Endothelial cell of umbilical vein (primary cell): ENCODE measurements at regions of chr14 and their contacts with region 1.

Region 1: DNA sequence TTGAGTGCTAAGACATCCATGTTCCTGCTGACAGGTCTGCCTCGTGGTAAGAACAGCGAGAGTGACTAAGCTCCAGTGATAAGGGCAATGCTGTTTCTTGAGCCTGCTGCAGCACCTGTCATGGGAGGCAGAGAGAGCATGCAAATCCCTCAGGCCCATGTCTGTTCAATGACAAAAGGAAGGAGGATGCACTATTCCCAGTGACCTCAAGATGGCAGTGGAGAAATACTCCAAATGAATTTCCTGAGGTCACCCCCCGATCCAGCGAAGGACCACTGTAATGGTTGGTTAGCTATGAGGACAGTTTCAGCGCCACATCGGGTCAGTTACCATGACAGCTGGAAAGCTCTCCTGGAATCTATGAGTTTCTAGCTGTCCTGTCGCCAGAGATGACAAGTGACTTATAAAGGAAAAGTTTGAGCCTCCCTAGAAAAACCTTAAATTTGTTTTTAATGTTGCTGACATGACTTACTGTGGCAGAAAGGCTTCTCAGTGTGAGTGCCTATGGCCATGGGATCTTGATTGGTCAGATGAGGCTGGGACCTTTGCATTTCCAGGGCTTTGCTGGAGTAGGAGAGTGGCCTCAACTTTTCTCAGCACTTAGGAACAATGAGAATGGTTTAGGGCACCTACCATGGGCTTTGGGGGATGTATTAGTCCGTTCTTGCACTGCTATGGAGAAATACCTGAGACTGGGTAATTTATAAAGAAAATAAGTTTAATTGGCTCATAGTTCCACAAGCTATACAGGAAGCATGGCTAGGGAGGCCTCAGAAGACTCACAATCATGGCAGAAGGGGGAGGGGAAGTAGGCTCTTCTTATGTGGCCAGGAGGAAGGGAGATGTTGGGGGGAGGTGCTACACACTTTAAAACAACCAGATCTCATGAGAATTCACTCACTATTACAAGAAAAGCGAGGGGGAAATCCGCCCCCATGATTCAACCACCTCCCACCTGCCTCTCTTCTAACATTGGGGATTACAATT is 88.0 kb upstream of the TMEM260 start:
- DNase-seq: peak; percentile 68
- H3K4me3 ChIP-seq: no peak overlapping the region
- H3K27ac ChIP-seq: no peak overlapping the region
- H3K4me1 ChIP-seq: no peaks in the 10 kb centered on the region
- H3K27me3 ChIP-seq: peaks cover 2 to 6% of the 10 kb centered on the region in 2 experiments
- CTCF ChIP-seq: peak; percentile 61 to 64
- POLR2A ChIP-seq: no peak

Region 2: DNA sequence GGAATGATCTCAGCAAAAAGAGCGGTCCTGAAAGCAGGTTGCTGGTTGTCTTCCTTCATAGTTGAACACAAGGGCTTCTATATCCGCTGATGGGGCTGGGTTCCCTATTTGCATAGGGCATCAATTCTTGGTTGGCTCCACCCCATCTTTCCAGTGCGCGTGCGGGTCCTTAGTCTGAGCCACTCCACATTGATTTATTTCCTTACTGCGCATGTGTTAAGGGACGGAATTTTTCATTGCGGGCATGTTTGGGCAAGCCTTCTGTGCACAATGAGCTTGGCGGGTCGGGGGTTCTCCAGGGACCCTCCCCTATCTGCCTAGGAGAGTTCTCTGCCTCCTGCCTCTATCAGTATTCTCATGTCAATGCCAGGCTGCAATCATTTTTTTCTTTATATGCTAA is 1279.0 kb before region 1 on chr14:
- CTCF ChIA-PET with region 1: no interaction called
- POLR2A ChIA-PET with region 1: no interaction called
- dilution Hi-C with region 1: no loop called
- intact Hi-C with region 1: loop called (anchors 10 kb)
- DNase-seq: no peak
- H3K4me3 ChIP-seq: no peak overlapping the region
- H3K27ac ChIP-seq: no peak overlapping the region
- H3K4me1 ChIP-seq: no peaks in the 10 kb centered on the region
- H3K27me3 ChIP-seq: no peaks in the 10 kb centered on the region
- CTCF ChIP-seq: no peak
- POLR2A ChIP-seq: no peak

Region 3: DNA sequence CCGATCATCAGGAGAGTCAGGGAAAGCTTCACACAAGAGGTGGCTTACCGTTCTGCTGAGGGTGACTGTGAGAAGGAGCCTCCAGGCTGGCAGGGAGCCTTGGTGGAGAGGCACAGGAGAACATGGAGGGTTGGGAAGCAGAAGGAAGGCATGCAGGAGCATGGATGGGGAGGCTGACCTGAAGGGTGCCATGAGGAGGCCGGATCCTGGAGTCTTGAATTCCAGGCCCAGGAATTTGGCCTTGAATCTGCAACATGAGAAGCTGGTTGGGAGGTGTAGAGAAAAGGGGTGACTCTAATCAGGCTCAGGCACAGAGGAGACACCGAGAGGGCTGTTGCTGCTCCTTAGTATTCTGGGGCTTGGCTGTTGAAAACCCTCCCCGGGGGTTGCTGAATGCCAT is 243.2 kb before region 1 on chr14:
- CTCF ChIA-PET with region 1: no interaction called
- POLR2A ChIA-PET with region 1: no interaction called
- dilution Hi-C with region 1: no loop called
- intact Hi-C with region 1: no loop called
- DNase-seq: no peak
- H3K4me3 ChIP-seq: no peak overlapping the region
- H3K27ac ChIP-seq: no peak overlapping the region
- H3K4me1 ChIP-seq: no peaks in the 10 kb centered on the region
- H3K27me3 ChIP-seq: no peaks in the 10 kb centered on the region
- CTCF ChIP-seq: no peak
- POLR2A ChIP-seq: no peak

Region 4: GRCh38 chr14:56474419-56475022 is 17.1 kb before region 1 on chr14:
- CTCF ChIA-PET with region 1: interaction called, 19 read pairs
- POLR2A ChIA-PET with region 1: no interaction called
- dilution Hi-C with region 1: no loop called
- intact Hi-C with region 1: no loop called
- DNase-seq: peak; percentile 54
- H3K4me3 ChIP-seq: no peak overlapping the region
- H3K27ac ChIP-seq: no peak overlapping the region
- H3K4me1 ChIP-seq: no peaks in the 10 kb centered on the region
- H3K27me3 ChIP-seq: peaks cover 0 to 8% of the 10 kb centered on the region in 2 experiments
- CTCF ChIP-seq: peak; percentile 63 to 64
- POLR2A ChIP-seq: no peak

Region 5: DNA sequence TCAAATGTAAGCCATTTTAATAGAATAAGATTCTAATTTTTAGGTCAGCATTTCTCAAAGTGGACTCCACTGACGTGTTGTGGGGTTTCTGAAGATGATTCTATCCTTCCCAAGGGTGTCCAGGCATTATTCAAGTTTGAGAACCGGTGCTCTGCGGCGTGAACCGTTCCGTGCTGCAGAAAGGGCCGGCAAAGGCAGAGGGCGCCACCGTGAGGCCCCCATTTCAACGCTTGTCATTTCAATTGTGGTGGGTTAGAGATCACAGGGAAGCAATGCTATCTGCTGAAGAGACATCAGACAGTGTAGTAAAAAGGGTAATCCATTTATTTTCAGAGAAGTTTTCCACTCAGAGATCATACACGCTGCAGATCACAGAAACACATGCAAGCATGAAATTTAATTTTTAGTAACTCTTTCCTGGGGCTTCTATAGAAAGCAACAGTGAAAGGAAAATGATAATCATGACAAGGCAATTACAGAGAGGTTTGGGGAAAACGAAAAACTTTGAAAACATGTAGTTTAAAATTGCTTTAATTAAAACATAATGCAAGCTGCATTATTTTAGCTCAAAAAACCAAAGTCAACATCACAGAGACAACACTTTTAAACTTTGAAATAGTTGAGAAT is 575.4 kb after region 1 on chr14:
- CTCF ChIA-PET with region 1: no interaction called
- POLR2A ChIA-PET with region 1: no interaction called
- dilution Hi-C with region 1: no loop called
- intact Hi-C with region 1: loop called (anchors 2 kb)
- DNase-seq: peak; percentile 37
- H3K4me3 ChIP-seq: no peak overlapping the region
- H3K27ac ChIP-seq: no peak overlapping the region
- H3K4me1 ChIP-seq: no peaks in the 10 kb centered on the region
- H3K27me3 ChIP-seq: peaks cover 4 to 17% of the 10 kb centered on the region in 2 experiments
- CTCF ChIP-seq: peak; percentile 57 to 68
- POLR2A ChIP-seq: no peak

Region 6: DNA sequence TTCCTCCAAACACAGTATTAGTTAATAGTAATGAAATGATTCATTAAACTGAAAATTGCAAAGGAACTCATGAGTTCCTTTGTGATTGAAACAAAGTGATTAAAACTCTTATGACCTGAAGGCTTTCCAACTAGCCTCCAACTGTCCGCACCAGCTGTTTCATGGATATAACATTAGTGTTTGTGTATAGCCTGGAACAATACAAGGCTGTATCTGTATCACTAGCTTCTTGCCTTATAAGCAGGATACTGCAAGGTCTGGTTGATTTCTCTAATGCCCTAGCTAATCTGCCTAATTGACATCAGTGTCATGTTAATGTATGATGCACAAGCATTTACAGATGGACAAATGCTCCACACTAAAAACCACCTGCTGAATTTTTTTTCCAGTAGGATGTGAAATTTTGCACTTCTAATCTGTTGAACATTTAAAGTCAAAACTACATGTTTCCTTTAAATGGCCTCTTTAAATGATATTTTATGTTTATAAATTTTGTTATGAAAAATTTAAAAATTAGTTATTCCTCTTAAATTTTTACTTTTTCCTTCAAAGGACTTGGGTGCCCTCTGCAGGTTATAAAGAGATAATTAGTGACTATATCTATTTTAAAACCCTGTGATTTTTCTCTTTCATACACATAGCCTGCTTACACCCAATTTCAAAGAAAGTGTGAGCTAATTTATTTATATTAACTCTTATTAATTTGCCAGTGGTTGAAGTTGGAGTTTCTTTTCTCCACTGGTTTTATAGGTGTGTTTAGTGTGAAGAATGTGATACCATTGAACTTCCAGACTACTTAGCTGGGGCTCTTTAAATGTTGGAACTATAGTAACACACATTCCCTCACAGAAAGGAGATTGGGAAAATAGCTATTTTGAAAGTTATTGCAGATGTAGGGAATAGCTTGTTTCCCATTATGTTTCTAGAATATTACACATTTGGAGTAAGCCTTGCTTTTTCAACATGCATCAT is 802.6 kb after region 1 on chr14:
- CTCF ChIA-PET with region 1: interaction called, 23 read pairs
- POLR2A ChIA-PET with region 1: no interaction called
- dilution Hi-C with region 1: no loop called
- intact Hi-C with region 1: loop called (anchors 5 kb)
- DNase-seq: peak; percentile 34
- H3K4me3 ChIP-seq: no peak overlapping the region
- H3K27ac ChIP-seq: no peak overlapping the region
- H3K4me1 ChIP-seq: no peaks in the 10 kb centered on the region
- H3K27me3 ChIP-seq: no peaks in the 10 kb centered on the region
- CTCF ChIP-seq: no peak
- POLR2A ChIP-seq: no peak

Region 7: GRCh38 chr14:57382283-57382682 is 890.7 kb after region 1 on chr14:
- CTCF ChIA-PET with region 1: interaction called, 33 read pairs
- POLR2A ChIA-PET with region 1: no interaction called
- dilution Hi-C with region 1: no loop called
- intact Hi-C with region 1: loop called (anchors 1 kb)
- DNase-seq: peak; percentile 81
- H3K4me3 ChIP-seq: no peak overlapping the region
- H3K27ac ChIP-seq: peak overlapping the region; percentile 76
- H3K4me1 ChIP-seq: peaks cover 18% of the 10 kb centered on the region
- H3K27me3 ChIP-seq: no peaks in the 10 kb centered on the region
- CTCF ChIP-seq: no peak
- POLR2A ChIP-seq: peak; percentile 32

Region 8: GRCh38 chr14:58072288-58073071 is 1580.9 kb after region 1 on chr14:
- CTCF ChIA-PET with region 1: interaction called, 10 read pairs
- POLR2A ChIA-PET with region 1: no interaction called
- dilution Hi-C with region 1: no loop called
- intact Hi-C with region 1: no loop called
- DNase-seq: peak; percentile 68
- H3K4me3 ChIP-seq: no peak overlapping the region
- H3K27ac ChIP-seq: no peak overlapping the region
- H3K4me1 ChIP-seq: no peaks in the 10 kb centered on the region
- H3K27me3 ChIP-seq: peaks cover 8 to 14% of the 10 kb centered on the region in 2 experiments
- CTCF ChIP-seq: peak; percentile 50 to 67
- POLR2A ChIP-seq: no peak